Psoas muscle (tissue), 8 donors: ENCODE measurements at regions of chr14 and their contacts with region 1.

Region 1: GRCh38 chr14:105773995-105774394 is 247.6 kb downstream of the TMEM121 start:
- DNase-seq: no peak
- ATAC-seq: no peak
- H3K4me3 ChIP-seq: no peak overlapping the region
- H3K27ac ChIP-seq: no peak overlapping the region
- H3K4me1 ChIP-seq: no peaks in the 10 kb centered on the region
- H3K27me3 ChIP-seq: no peaks in the 10 kb centered on the region
- CTCF ChIP-seq: no peak

Region 2: GRCh38 chr14:105363847-105364708 is 409.9 kb before region 1 on chr14:
- intact Hi-C with region 1: no loop called
- DNase-seq: no peak
- ATAC-seq: no peak
- H3K4me3 ChIP-seq: no peak overlapping the region
- H3K27ac ChIP-seq: no peak overlapping the region
- H3K4me1 ChIP-seq: no peaks in the 10 kb centered on the region
- H3K27me3 ChIP-seq: no peaks in the 10 kb centered on the region
- CTCF ChIP-seq: no peak

Region 3: DNA sequence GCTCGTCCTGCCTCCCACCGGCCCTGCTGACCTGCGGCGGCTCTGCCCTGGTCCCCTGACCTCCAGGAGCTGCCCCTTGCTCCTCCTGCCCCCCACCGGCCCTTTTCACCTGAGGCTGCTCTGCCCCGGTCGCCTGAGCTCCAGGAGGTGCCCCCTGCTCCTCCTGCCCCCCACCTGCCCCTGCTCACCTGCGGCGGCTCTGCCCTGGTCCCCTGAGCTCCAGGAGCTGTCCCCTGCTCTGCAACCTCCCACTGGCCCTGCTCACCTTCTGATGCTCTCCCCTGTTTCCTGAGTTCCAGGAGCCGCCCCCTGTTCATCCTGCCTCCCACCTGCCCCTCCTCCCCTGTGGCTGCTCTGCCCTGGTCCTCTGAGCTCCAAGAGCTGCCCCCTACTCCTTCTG is 146.3 kb before region 1 on chr14:
- intact Hi-C with region 1: loop called in 1 of 2 experiments (anchors 5 kb)
- DNase-seq: no peak
- ATAC-seq: no peak
- H3K4me3 ChIP-seq: no peak overlapping the region
- H3K27ac ChIP-seq: no peak overlapping the region
- H3K4me1 ChIP-seq: no peaks in the 10 kb centered on the region
- H3K27me3 ChIP-seq: peaks cover 0 to 3% (median 0%) of the 10 kb centered on the region in 3 donors
- CTCF ChIP-seq: no peak

Region 4: GRCh38 chr14:105666420-105666819 is 107.6 kb before region 1 on chr14:
- intact Hi-C with region 1: no loop called
- DNase-seq: no peak
- ATAC-seq: no peak
- H3K4me3 ChIP-seq: no peak overlapping the region
- H3K27ac ChIP-seq: no peak overlapping the region
- H3K4me1 ChIP-seq: no peaks in the 10 kb centered on the region
- H3K27me3 ChIP-seq: no peaks in the 10 kb centered on the region
- CTCF ChIP-seq: no peak

Region 5: GRCh38 chr14:106657460-106657859 is 883.5 kb after region 1 on chr14:
- intact Hi-C with region 1: no loop called
- DNase-seq: no peak
- ATAC-seq: no peak
- H3K4me3 ChIP-seq: no peak overlapping the region
- H3K27ac ChIP-seq: no peak overlapping the region
- H3K4me1 ChIP-seq: no peaks in the 10 kb centered on the region
- H3K27me3 ChIP-seq: no peaks in the 10 kb centered on the region
- CTCF ChIP-seq: no peak